PC-9 (cell line): ENCODE measurements at regions of chr5 and their contacts with region 1.

Region 1: GRCh38 chr5:177425801-177426565 is 493 bp upstream of the GRK6 start:
- DNase-seq: peak; percentile 99 to 100
- H3K4me3 ChIP-seq: peak overlapping the region; percentile 64
- H3K27ac ChIP-seq: peak overlapping the region; percentile 81
- H3K4me1 ChIP-seq: peaks cover 23% of the 10 kb centered on the region
- H3K27me3 ChIP-seq: no peaks in the 10 kb centered on the region
- CTCF ChIP-seq: no peak

Region 2: DNA sequence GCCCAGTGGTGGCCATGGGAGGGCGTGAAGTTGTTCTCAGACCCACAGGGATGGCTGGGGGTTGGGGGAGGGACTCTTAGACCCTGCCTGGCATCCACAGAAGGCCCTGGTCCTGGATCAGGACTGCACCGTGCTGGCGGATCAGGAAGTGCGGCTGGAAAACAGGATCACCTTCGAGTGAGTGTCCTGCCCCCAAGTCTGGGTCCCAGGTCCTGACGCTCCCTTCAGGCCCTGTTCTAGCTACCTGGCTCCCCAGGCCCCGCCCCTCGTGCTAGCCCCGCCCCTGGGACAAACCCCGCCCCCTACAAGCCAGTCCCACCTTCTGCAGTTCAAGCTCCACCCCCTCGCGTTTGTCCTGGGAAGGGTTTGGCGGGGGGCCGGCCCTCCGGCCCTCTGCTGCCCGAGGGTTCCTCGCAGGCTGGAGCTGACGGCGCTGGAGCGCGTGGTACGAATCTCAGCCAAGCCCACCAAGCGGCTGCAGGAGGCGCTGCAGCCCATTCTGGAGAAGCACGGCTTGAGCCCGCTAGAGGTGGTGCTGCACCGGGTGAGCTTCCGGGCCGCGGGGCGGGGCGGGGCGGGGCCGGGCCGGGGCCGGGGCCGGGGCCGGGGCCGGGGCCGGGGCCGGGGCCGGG is 55.4 kb before region 1 on chr5:
- CTCF ChIA-PET with region 1: interaction called, 13 read pairs
- POLR2A ChIA-PET with region 1: interaction called, 20 read pairs
- intact Hi-C with region 1: no loop called
- DNase-seq: peak; percentile 86 to 95
- H3K4me3 ChIP-seq: peak overlapping the region; percentile 54; the same call in 1 of the 2 replicates
- H3K27ac ChIP-seq: no peak overlapping the region
- H3K4me1 ChIP-seq: peaks cover 11% of the 10 kb centered on the region
- H3K27me3 ChIP-seq: no peaks in the 10 kb centered on the region
- CTCF ChIP-seq: peak; percentile 66

Region 3: DNA sequence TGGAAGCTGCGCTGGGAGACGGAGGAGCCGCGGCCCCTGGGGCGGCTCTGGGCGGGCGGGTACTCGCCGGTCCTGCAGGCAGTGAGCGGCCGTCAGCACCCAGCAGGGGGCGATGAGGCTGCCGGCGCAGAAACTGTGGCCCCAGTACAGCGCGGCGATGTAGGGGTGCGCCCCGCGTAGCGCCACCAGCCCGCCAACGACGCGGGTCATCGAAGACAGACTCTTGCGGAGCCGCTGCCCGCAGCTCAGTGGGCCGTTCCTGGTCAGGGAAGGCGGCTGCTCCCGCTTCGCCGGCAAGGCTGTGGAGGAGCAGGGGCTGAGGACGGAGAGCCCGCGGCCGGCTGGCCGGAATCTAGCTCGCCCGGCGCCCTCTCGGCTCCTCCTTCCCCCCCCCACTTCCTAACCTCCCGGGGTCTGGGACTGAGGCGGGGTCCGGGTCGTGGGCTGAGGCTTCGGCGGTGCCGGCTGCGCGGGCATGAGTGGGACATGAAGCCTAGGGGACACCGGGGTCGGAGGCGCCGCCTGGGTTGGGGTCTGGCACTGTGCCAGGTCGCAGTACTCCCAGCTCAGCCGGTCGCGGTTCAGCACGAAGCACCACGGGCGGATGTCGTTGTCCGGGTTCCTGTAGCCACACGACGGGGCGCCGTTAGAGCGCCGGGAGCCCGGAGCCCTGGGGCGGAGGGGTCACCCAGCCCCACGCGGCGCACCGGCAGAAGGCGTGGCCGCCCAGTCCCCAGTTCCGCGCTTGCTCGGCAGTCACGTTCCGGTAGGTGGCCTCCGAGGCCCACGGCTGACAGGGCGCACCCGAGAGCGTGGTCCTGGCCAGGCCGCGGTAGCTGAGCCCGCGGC is 22.0 kb before region 1 on chr5:
- CTCF ChIA-PET with region 1: interaction called, 13 read pairs
- POLR2A ChIA-PET with region 1: interaction called, 5 read pairs
- intact Hi-C with region 1: loop called (anchors 1 kb)
- DNase-seq: peak; percentile 51 to 86
- H3K4me3 ChIP-seq: peak overlapping the region; percentile 78
- H3K27ac ChIP-seq: no peak overlapping the region
- H3K4me1 ChIP-seq: peaks cover 3% of the 10 kb centered on the region; the same call in 1 of the 2 replicates
- H3K27me3 ChIP-seq: no peaks in the 10 kb centered on the region
- CTCF ChIP-seq: peak; percentile 73

Region 4: GRCh38 chr5:177454397-177455035 is 28.5 kb after region 1 on chr5:
- CTCF ChIA-PET with region 1: interaction called, 7 read pairs
- POLR2A ChIA-PET with region 1: no interaction called
- intact Hi-C with region 1: loop called (anchors 2 kb)
- DNase-seq: peak; percentile 71 to 96
- H3K4me3 ChIP-seq: peak overlapping the region; percentile 77
- H3K27ac ChIP-seq: 0 out of 2 replicates have a peak overlapping the region, but pooled peaks have one; percentile 26
- H3K4me1 ChIP-seq: 0 out of 2 replicates have a peak, but pooled peaks cover 5% of the 10 kb centered on the region
- H3K27me3 ChIP-seq: no peaks in the 10 kb centered on the region
- CTCF ChIP-seq: peak; percentile 82